Activated CD4-positive, alpha-beta memory T cell treated with anti-CD3 and anti-CD28 coated beads, Interleukin-2, amount 10 ng/mL, durations not matched to agents 7 days and 5 days (primary cell): ENCODE measurements at regions of chr22 and their contacts with region 1.

Region 1: GRCh38 chr22:41697126-41697775 is 2.1 kb upstream of the MEI1 start:
- DNase-seq: peak; percentile 91
- H3K4me3 Mint-ChIP-seq: no peak overlapping the region
- H3K27ac Mint-ChIP-seq: peak overlapping the region; percentile 68
- H3K4me1 Mint-ChIP-seq: peaks cover 18% of the 10 kb centered on the region
- H3K27me3 Mint-ChIP-seq: peaks cover 4% of the 10 kb centered on the region

Region 2: DNA sequence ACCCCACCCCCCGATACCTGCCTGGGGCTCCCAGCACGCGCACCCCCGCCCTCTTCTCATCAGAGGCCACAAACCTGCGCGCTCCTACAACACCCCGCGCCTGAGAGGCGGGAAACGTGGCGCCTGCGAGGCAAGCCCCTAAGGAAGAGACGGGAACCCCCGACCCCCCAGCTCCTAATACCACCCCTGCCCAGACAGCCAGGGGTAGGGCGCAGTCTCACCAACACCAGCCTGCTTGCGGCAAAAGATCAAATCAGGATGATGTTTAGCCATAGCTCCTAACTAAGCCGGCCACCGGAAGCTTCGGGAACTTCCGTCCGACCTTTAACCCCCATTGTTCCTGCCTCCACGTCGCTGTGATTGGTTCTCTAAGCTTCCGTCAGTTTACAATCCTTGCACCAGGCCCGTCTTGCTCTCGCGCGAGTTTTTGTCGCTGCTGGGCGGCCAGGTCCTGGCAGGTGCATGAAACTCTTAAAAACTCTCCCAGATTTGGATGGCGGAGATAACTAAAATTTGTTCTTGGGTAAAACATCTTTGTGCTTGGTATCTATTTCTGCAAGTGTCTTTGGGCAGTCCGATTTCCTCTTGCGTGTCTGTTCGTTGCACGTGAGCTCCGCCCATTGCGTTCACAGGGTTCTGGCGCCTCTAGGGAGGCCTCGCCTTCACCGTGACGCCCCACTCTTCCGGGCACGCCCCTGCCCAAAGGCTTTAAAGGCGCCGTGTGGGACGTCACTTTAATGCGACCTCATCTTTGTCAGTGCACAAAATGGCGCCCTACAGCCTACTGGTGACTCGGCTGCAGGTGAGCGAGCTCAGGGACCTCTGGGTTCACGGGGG is 228.7 kb before region 1 on chr22 and contains the starts of genes ACO2 and PHF5A:
- CTCF ChIA-PET with region 1: no interaction called
- POLR2A ChIA-PET with region 1: no interaction called
- DNase-seq: peak; percentile 98
- H3K4me3 Mint-ChIP-seq: peak within 1 kb of the TSS; percentile 77
- H3K27ac Mint-ChIP-seq: peak within 1 kb of the TSS; percentile 96
- H3K4me1 Mint-ChIP-seq: peaks cover 58% of the 10 kb centered on the region
- H3K27me3 Mint-ChIP-seq: no peaks in the 10 kb centered on the region
- total RNA-seq, gene ACO2: 69.9 to 72.2 TPM
- total RNA-seq, gene PHF5A: 43.9 to 55.3 TPM

Region 3: DNA sequence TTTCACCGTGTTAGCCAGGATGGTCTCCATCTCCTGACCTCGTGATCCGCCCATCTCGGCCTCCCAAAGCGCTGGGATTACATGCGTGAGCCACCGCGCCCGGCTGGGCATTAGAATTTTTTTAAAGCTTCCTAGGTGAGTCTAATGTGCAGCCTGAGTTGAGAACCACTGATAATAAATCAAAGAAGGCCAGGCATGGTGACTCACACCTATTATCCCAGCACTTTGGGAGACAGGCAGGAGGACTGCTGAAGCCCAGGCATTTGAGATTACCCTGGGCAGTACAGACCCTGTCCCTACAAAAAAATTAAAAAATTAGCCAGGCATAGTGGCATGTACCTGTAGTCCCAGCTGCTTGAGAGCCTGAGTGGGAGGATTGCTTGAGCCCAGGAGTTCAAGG is 15.8 kb after region 1 on chr22:
- CTCF ChIA-PET with region 1: interaction called, 12 read pairs
- POLR2A ChIA-PET with region 1: no interaction called
- DNase-seq: no peak
- H3K4me3 Mint-ChIP-seq: no peak overlapping the region
- H3K27ac Mint-ChIP-seq: no peak overlapping the region
- H3K4me1 Mint-ChIP-seq: no peaks in the 10 kb centered on the region
- H3K27me3 Mint-ChIP-seq: peaks cover 10% of the 10 kb centered on the region

Region 4: GRCh38 chr22:41746567-41747400 is 49.5 kb after region 1 on chr22:
- CTCF ChIA-PET with region 1: interaction called, 22 read pairs
- POLR2A ChIA-PET with region 1: no interaction called
- DNase-seq: peak; percentile 58
- H3K4me3 Mint-ChIP-seq: no peak overlapping the region
- H3K27ac Mint-ChIP-seq: no peak overlapping the region
- H3K4me1 Mint-ChIP-seq: peaks cover 11% of the 10 kb centered on the region
- H3K27me3 Mint-ChIP-seq: peaks cover 18% of the 10 kb centered on the region